H1 (cell line): ENCODE measurements at regions of chr5 and their contacts with region 1.

Region 1: GRCh38 chr5:54895816-54896341 is 89.5 kb downstream of the ESM1 start:
- DNase-seq: no peak
- H3K4me3 ChIP-seq: no peak overlapping the region
- H3K27ac ChIP-seq: no peak overlapping the region
- H3K4me1 ChIP-seq: no peaks in the 10 kb centered on the region
- H3K27me3 ChIP-seq: no peaks in the 10 kb centered on the region
- CTCF ChIP-seq: peak in 2 of 3 experiments; percentile 33 to 50; a peak in 3 of 4 replicates
- EP300 ChIP-seq: no peak
- POLR2A ChIP-seq: no peak
- RAD21 ChIP-seq: peak; percentile 61 to 70

Region 2: DNA sequence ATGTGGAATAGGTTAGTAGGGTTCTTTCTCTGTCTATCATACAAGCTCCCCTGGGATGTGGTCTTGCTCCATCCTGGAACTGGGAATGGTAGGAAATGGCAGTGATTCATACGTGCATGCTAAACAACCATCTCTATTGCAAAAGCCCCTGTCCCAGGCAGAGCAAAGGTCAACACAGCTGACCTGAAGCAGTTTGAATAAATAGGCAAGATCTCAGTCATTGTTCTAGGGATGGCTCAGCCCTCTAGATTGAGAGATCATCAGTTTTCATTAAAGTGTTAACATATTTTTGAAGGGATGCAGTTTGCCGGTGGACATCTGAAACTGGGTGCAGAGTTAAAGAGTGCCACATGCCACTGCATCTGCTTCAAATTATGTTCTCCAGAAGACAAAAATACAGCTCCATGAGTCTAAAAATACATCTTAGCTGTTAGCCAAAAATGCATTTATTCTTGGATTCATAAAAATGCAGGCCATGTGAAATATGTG is 134.6 kb before region 1 on chr5:
- CTCF ChIA-PET with region 1: no interaction called
- POLR2A ChIA-PET with region 1: no interaction called
- DNase-seq: no peak
- H3K4me3 ChIP-seq: no peak overlapping the region
- H3K27ac ChIP-seq: no peak overlapping the region
- H3K4me1 ChIP-seq: no peaks in the 10 kb centered on the region
- H3K27me3 ChIP-seq: no peaks in the 10 kb centered on the region
- CTCF ChIP-seq: no peak
- EP300 ChIP-seq: no peak
- POLR2A ChIP-seq: no peak
- RAD21 ChIP-seq: no peak

Region 3: DNA sequence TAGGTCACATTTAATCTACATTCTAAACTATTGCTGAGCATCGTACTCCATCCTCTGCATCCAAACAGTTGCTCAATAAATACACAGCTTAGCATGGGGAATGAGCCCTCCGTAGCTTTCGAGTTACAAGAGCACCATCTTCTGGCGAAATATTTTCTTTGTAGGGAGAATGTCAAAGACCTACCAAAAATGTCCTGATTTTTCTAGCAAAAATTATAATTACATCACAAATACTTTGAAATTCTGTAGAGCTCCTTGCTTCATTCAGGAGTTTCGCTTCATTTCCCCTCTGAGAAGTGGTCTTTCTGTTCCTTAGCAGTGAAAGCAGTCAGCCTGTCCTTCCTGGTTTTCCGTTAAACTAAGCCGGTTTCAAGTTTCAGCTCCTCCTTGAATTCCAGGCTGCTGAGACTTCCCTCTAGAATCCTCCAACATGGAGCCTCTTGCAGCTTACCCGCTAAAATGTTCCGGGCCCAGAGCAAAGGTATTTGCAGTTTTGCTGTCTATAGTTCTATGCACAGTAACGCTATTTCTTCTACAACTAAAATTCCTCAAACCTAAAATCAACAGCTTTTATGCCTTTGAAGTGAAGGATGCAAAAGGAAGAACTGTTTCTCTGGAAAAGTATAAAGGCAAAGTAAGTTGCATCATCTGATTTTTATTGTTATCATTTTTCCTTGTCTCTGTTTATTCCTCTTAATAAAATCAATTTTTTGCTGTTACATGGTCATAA is 264.0 kb after region 1 on chr5 and contains the start of gene GPX8:
- CTCF ChIA-PET with region 1: interaction called, 12 read pairs
- POLR2A ChIA-PET with region 1: interaction called, 3 read pairs
- DNase-seq: no peak
- H3K4me3 ChIP-seq: peak within 1 kb of the TSS; percentile 47 to 78 (median 76)
- H3K27ac ChIP-seq: peak within 1 kb of the TSS; percentile 70
- H3K4me1 ChIP-seq: no peaks in the 10 kb centered on the region
- H3K27me3 ChIP-seq: no peaks in the 10 kb centered on the region
- CTCF ChIP-seq: peak in 2 of 3 experiments; percentile 50 to 60; a peak in 3 of 4 replicates
- EP300 ChIP-seq: no peak
- POLR2A ChIP-seq: peak; percentile 69 to 86
- RAD21 ChIP-seq: peak; percentile 85 to 87
- total RNA-seq, gene GPX8: 55.5 and 60.4 TPM in 2 replicates